ENCODE measurements at regions of chr18 and their contacts with region 1.

Region 1: DNA sequence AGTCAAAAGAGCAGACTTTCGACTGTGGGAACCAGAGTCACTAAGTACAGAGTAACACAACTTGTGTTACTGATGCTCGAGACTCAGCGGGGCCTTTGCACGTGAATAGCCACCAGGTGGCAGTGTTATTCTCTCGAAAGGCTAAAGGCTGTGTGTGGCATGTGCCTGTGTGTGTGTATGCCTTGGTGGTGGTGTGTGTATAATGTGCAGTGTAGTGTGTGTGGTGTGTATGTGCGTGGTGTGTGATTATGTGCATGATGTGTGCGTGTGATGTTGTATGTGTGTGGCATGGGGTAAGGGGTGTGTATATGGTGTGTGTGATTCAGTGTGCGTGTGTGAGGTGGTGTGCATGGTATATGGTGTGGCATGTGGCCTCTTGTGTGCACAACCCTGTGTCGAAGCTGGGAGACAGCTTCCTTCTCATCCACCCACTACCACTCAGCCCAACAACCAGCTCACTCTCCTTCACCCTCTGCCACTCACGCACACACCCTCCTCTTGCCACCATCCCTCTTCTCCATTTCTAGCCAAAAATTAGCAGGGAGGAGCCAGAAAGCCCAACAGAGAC is 83.0 kb upstream of the ZNF532 start:
- DNase-seq: peak; percentile 86
- ATAC-seq: peak; percentile 78
- H3K4me3 Mint-ChIP-seq: no peak overlapping the region
- H3K27ac Mint-ChIP-seq: no peak overlapping the region
- H3K4me1 Mint-ChIP-seq: peaks cover 32% of the 10 kb centered on the region
- H3K27me3 Mint-ChIP-seq: no peaks in the 10 kb centered on the region; the same call in 1 of the 2 replicates
- CTCF ChIP-seq: peak; percentile 86

Region 2: DNA sequence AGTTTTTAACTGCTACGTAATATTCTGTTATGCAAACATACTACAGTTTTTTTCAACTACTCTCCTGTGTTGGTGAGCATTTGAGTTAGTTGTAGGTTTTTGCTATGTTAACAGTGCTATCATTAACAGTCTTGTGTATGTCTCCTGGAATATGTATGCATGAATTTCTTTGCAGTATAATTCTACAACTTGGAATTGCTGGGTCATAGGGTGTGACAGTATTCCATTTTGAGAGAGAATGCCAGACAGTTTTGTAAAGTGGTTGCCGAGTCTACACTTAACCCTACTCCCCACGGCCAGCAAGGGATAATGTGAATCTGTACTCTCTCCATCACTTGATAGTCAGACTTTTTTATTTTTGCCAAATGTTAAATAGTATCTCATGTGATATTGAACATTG is 43.4 kb before region 1 on chr18:
- CTCF ChIA-PET with region 1: no interaction called
- POLR2A ChIA-PET with region 1: no interaction called
- DNase-seq: no peak
- ATAC-seq: no peak
- H3K4me3 Mint-ChIP-seq: no peak overlapping the region
- H3K27ac Mint-ChIP-seq: no peak overlapping the region
- H3K4me1 Mint-ChIP-seq: no peaks in the 10 kb centered on the region
- H3K27me3 Mint-ChIP-seq: no peaks in the 10 kb centered on the region
- CTCF ChIP-seq: no peak

Region 3: DNA sequence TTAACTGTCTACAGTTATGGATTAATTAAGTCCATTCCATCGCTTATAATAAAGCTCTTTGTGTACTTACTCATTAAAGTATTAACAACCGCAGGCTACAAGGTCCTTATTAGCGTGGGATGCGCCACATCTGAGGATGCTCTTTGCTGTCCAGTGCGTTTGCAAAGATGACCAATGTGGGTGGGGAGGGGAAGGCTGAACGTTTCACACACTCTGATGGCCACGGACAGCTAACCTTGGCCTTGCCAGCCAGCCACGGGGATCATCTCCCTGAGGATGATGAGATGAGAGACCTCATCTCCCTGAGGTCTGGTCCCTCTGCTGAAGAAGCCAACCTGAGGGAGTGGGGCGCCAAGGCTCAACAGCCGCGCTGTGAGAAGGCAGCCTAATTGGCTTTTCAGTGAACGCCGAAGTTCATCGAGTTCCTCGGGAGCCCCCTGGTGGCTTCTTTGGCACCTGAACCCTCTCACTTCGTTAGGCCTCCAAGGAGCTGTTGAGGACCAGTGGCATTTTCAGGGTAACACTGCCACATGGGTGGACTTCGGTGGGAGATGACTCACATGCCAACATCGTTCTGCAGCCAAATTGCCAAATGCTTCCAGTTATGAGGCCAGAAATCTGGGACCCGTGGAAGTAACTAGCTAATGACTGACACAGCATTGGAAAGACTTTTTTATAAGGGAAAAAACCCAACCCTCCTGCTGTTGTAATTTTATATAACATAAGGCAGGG is 288.6 kb after region 1 on chr18:
- CTCF ChIA-PET with region 1: interaction called, 21 read pairs
- POLR2A ChIA-PET with region 1: no interaction called
- DNase-seq: peak; percentile 96
- ATAC-seq: peak; percentile 98
- H3K4me3 Mint-ChIP-seq: no peak overlapping the region
- H3K27ac Mint-ChIP-seq: no peak overlapping the region
- H3K4me1 Mint-ChIP-seq: no peaks in the 10 kb centered on the region
- H3K27me3 Mint-ChIP-seq: no peaks in the 10 kb centered on the region
- CTCF ChIP-seq: peak; percentile 82